Activated T-helper 2 cell treated with anti-CD3 and anti-CD28 coated beads, Interferon-gamma antibody, Interleukin-2, Interleukin-4, amounts not matched to agents 10 μg/mL and 5 μg/mL and 100 μg/mL, durations not matched to agents 14 hours and 24 hours and 36 hours (primary cell): ENCODE measurements at regions of chr6 and their contacts with region 1.

Region 1: DNA sequence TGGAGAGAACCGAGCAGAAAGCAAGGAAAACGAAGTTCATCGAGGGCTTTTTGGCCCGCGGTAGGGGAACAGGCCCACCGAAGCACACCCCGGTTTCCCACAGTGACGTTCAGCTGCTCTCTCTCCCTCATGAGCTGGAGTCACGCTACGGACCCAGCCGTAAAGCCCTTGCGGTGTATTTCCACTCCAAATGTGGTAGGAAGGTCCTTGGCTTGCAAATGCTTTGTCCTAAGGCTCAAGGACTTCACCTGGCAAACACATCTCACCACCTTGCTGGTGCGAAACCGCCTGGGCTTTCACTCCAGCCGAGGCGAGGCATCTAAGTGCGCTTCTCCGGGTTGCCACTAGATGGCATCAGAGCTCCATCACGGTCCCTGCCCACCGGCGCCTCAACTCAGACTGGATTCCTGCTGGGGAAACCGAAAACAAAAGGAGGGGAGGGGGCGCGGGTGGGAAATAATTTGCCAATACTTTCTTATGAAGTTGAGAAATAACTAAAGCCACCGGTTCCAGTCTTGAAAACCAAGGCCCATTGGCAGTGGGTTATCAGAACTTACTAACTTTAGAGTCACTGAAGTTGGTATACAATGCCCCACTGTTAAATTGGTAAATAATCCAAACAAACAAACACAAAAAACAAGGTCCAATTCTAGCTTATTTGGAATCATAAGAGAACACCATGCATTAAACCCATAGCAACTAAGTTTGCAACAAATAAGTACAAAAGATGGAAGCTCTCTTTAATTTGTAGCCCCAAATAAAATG is 13.4 kb upstream of the FOXC1 start:
- DNase-seq: peak; percentile 42
- H3K4me3 Mint-ChIP-seq: no peak overlapping the region
- H3K27ac Mint-ChIP-seq: no peak overlapping the region
- H3K4me1 Mint-ChIP-seq: no peaks in the 10 kb centered on the region
- H3K27me3 Mint-ChIP-seq: peaks cover 55% of the 10 kb centered on the region

Region 2: GRCh38 chr6:1131285-1132079 is 464.8 kb before region 1 on chr6:
- intact Hi-C with region 1: no loop called
- DNase-seq: no peak
- H3K4me3 Mint-ChIP-seq: no peak overlapping the region
- H3K27ac Mint-ChIP-seq: no peak overlapping the region
- H3K4me1 Mint-ChIP-seq: no peaks in the 10 kb centered on the region
- H3K27me3 Mint-ChIP-seq: peaks cover 9% of the 10 kb centered on the region

Region 3: GRCh38 chr6:1418471-1419191 is 177.6 kb before region 1 on chr6:
- intact Hi-C with region 1: no loop called
- DNase-seq: no peak
- H3K4me3 Mint-ChIP-seq: no peak overlapping the region
- H3K27ac Mint-ChIP-seq: no peak overlapping the region
- H3K4me1 Mint-ChIP-seq: no peaks in the 10 kb centered on the region
- H3K27me3 Mint-ChIP-seq: peaks cover 10% of the 10 kb centered on the region

Region 4: GRCh38 chr6:2448820-2449571 is 852.7 kb after region 1 on chr6:
- intact Hi-C with region 1: loop called (anchors 2 kb)
- DNase-seq: no peak
- H3K4me3 Mint-ChIP-seq: peak overlapping the region; percentile 24
- H3K27ac Mint-ChIP-seq: no peak overlapping the region
- H3K4me1 Mint-ChIP-seq: peaks cover 4% of the 10 kb centered on the region
- H3K27me3 Mint-ChIP-seq: peaks cover 27% of the 10 kb centered on the region